Naive thymus-derived CD4-positive, alpha-beta T cell (primary cell): ENCODE measurements at regions of chr15 and their contacts with region 1.

Region 1: GRCh38 chr15:28901987-28902745 is 16.4 kb downstream of the APBA2 start:
- DNase-seq: no peak
- ATAC-seq: no peak
- H3K4me3 ChIP-seq: no peak overlapping the region
- H3K4me3 Mint-ChIP-seq: peak overlapping the region in 7 of 10 donors; percentile 7 to 54 (median 26)
- H3K27ac ChIP-seq: no peak overlapping the region
- H3K27ac Mint-ChIP-seq: peak overlapping the region in 8 of 9 donors; percentile 19 to 84 (median 58)
- H3K4me1 ChIP-seq: peaks cover 0 to 15% of the 10 kb centered on the region in 2 donors
- H3K4me1 Mint-ChIP-seq: peaks cover 0 to 99% (median 89%) of the 10 kb centered on the region in 7 donors
- H3K27me3 ChIP-seq: no peaks in the 10 kb centered on the region
- H3K27me3 Mint-ChIP-seq: peaks cover 0 to 5% (median 0%) of the 10 kb centered on the region in 5 donors

Region 2: DNA sequence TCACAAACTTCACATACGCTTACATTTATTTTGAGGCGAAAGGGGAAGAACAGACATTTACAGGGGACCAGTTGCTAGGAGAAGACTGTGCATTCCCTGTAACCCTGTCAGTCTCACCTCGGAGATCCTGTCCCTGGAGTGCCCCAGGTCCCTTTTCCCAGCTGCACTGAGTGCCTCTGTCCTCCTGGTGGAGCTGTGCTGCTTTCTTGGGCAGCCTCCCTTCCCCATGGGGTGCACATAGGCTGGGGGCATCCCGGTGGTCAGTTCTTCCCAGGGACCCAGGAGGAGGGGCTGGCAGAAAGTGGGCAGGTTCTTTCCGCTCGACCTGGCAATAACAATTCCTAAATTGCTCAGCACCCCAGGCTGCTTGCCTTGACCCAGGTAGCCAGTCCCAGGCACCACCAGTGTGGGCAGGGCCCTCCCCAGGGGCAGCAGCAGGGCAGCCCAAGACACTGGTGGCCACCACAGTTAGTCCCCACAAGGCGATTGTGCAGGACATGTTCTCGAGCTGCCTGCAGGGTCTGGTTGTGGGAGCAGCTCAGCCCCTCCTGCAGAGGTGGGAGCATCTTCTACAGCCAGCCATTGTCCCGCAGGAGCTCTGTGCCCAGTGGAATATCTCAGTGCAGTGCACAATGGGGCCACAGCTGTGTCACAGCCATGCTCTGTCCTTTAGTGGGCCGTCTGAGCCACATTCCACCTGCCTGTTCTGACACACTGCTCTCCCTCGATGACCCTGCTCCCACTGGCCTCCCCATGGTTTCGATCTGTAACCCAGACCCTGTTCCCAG is 19.9 kb after region 1 on chr15:
- CTCF ChIA-PET with region 1: no interaction called
- POLR2A ChIA-PET with region 1: no interaction called
- intact Hi-C with region 1: loop called in 1 of 2 experiments (anchors 2 kb)
- DNase-seq: no peak
- ATAC-seq: no peak
- H3K4me3 ChIP-seq: no peak overlapping the region
- H3K4me3 Mint-ChIP-seq: peak overlapping the region in 8 of 10 donors; percentile 37 to 94 (median 74)
- H3K27ac ChIP-seq: no peak overlapping the region
- H3K27ac Mint-ChIP-seq: peak overlapping the region in 8 of 9 donors; percentile 54 to 93 (median 79)
- H3K4me1 ChIP-seq: peaks cover 0 to 51% of the 10 kb centered on the region in 2 donors
- H3K4me1 Mint-ChIP-seq: peaks cover 27 to 91% (median 75%) of the 10 kb centered on the region in 7 donors
- H3K27me3 ChIP-seq: no peaks in the 10 kb centered on the region
- H3K27me3 Mint-ChIP-seq: peaks cover 0 to 7% (median 0%) of the 10 kb centered on the region in 5 donors